Endothelial cell of umbilical vein (primary cell): ENCODE measurements at regions of chr18 and their contacts with region 1.

Region 1: DNA sequence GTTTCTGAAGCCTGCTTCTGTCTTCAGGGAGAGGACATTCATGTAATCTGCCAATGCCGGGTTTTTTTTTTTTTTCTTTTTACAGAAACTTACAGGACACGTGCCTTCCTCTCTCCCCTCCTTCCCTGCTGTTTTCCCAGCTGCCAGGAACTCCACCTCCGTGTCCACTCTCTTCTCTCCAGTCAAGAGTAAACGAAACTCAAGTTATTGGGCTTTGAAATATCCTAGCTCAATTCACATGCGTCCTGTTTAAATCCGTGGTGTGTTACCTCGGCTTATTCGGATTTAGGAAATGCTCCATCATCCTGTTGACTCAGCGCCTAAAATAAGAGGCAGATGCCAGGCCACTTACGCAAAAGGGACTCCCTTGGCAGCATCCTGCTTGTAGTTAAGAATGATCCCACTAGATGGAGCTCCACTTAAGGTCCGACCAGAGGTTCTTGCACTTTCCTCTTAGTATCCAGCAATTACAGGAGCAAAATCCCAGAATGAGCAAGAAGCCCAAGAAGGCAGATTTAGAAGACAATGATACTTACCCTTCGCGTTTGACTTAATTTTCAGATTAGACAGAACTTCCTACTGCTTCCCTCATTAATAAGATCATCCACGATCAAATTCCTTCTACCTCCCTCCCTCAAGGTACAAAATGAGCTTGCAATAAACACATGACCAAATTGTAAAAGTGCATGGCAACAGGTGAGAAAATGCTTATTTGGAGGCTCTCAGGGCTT is 97.2 kb upstream of the ZCCHC2 start:
- DNase-seq: peak; percentile 98
- H3K4me3 ChIP-seq: peak overlapping the region in 2 of 3 experiments; percentile 28 to 64
- H3K27ac ChIP-seq: peak overlapping the region; percentile 86
- H3K4me1 ChIP-seq: peaks cover 16% of the 10 kb centered on the region
- H3K27me3 ChIP-seq: no peaks in the 10 kb centered on the region
- CTCF ChIP-seq: peak; percentile 78 to 86
- POLR2A ChIP-seq: no peak

Region 2: GRCh38 chr18:61690418-61691138 is 735.1 kb before region 1 on chr18:
- CTCF ChIA-PET with region 1: no interaction called
- POLR2A ChIA-PET with region 1: no interaction called
- dilution Hi-C with region 1: no loop called
- intact Hi-C with region 1: no loop called
- DNase-seq: no peak
- H3K4me3 ChIP-seq: no peak overlapping the region
- H3K27ac ChIP-seq: no peak overlapping the region
- H3K4me1 ChIP-seq: peaks cover 16% of the 10 kb centered on the region
- H3K27me3 ChIP-seq: no peaks in the 10 kb centered on the region
- CTCF ChIP-seq: no peak
- POLR2A ChIP-seq: no peak

Region 3: GRCh38 chr18:62186774-62187542 is 238.7 kb before region 1 on chr18 and contains the starts of genes PIGN and RELCH:
- CTCF ChIA-PET with region 1: interaction called, 9 read pairs
- POLR2A ChIA-PET with region 1: no interaction called
- dilution Hi-C with region 1: no loop called
- intact Hi-C with region 1: loop called (anchors 1 kb)
- DNase-seq: peak; percentile 99
- H3K4me3 ChIP-seq: peak within 1 kb of the TSS; percentile 86 to 97 (median 94)
- H3K27ac ChIP-seq: peak within 1 kb of the TSS; percentile 79
- H3K4me1 ChIP-seq: peaks cover 34% of the 10 kb centered on the region
- H3K27me3 ChIP-seq: no peaks in the 10 kb centered on the region
- CTCF ChIP-seq: no peak
- POLR2A ChIP-seq: peak; percentile 88
- total RNA-seq, gene PIGN: 26.1 and 31.1 TPM in 2 replicates
- total RNA-seq, gene RELCH: 20.7 and 25.2 TPM in 2 replicates

Region 4: DNA sequence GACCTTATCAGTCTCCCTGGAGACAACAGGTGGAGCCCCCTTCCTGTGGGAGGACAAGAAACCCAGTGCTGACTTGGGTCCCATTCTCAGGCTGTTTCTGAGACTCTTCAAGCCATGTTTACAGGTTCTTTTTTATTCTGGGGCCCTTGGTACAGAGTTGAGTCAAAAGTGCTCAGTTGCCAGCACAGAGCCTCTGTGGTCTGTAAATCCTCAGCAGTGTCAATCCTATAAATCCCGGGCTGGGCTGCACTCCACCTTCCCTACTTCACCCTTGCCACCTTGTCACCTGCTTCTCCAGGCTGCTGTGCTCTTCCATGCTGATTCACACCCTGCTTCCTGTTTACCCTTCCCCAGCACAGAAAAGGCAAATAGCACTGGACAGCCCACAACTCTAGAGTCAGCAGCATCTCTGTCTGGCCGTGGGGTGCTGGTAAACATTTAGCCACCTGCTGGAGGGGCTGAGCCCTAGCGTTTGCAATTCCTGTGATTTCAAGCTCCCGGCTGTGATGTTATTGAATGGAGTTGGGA is 25.8 kb before region 1 on chr18:
- CTCF ChIA-PET with region 1: interaction called, 11 read pairs
- POLR2A ChIA-PET with region 1: no interaction called
- dilution Hi-C with region 1: no loop called
- intact Hi-C with region 1: no loop called
- DNase-seq: peak; percentile 46
- H3K4me3 ChIP-seq: no peak overlapping the region
- H3K27ac ChIP-seq: no peak overlapping the region
- H3K4me1 ChIP-seq: peaks cover 4% of the 10 kb centered on the region
- H3K27me3 ChIP-seq: no peaks in the 10 kb centered on the region
- CTCF ChIP-seq: peak; percentile 46 to 52
- POLR2A ChIP-seq: no peak

Region 5: DNA sequence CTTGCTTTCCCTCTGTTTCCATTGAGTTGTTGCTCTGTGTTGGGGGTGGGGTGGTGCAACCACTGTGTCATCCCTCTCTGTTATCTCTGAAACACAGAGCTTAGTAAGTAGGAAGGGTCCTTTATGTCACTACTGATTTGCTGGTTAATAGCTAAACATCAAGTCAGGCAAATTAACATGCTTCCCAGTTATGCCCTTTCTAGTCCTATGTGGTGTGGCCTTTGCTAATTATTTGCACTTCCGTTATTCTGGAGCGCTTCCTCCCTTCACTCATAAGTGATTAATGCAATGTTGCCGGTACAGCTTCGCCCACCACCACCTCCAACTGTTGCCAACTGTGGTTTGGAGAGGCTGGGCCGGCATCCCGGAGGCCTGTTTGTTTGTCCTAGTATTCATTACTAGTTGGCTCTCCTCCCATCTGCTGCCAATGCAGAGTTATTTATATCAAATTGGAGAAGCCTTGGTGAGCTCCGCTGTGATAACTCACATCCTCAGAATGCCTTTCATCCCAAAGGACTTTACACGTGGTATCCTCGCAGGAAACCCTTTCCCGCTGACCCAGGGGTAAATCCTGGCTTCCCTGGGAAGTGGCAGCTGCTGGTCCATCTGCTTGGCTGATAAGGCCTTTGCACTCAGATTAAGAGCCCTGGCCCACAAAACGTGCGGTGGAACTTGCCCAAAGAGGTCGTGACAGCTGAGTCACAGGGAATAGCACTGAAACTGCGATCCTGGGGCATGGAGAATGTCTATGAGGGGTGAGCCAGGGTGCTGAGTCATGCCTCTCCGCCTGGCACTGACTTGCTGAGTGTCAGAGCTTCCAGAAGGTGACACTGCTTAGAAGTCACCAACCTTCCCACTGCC is 25.1 kb after region 1 on chr18:
- CTCF ChIA-PET with region 1: interaction called, 71 read pairs
- POLR2A ChIA-PET with region 1: interaction called, 4 read pairs
- dilution Hi-C with region 1: no loop called
- intact Hi-C with region 1: loop called (anchors 1 kb)
- DNase-seq: peak; percentile 99
- H3K4me3 ChIP-seq: peak overlapping the region in 1 of 3 experiments; percentile 26
- H3K27ac ChIP-seq: peak overlapping the region; percentile 87
- H3K4me1 ChIP-seq: peaks cover 33% of the 10 kb centered on the region
- H3K27me3 ChIP-seq: no peaks in the 10 kb centered on the region
- CTCF ChIP-seq: no peak
- POLR2A ChIP-seq: peak; percentile 65

Region 6: DNA sequence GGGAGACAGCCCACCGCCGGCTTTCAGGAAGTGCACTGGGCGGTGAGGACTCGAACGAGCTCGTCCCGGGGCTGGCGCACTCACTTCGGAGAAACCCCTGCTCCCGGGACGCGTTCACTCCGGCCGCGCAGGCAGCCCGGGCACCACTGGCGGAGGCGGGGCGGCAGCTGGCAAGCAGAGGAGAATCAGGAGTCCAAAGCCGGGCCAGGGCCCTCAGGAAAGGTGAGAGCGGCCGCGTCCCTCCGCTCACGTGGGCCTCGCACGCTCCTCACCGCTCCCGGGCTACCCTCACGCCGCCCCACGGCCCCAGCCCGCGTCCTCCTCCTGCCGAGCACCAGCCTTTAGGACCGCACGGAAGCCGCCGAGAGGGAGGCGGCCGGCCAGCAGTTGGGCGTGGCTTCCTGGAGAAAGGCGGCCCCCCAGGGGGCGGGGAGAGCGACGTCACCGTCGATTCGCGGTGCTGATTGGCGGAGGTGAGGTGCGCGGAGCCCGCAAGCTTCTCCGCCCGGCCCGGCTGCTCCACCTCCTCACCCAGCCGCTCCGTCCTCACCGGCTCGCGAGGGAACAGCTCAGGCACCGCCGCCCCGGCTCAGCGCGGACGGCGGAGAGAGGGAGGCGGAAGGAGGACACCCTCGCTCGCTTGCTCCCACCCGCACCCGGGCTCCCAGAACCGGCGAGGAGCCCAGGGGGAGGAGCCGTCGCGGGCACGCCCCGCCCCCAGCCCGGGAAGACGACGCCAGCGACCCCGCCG is 97.0 kb after region 1 on chr18 and contains the start of gene ZCCHC2:
- CTCF ChIA-PET with region 1: interaction called, 60 read pairs
- POLR2A ChIA-PET with region 1: no interaction called
- dilution Hi-C with region 1: no loop called
- intact Hi-C with region 1: loop called (anchors 1 kb)
- DNase-seq: peak; percentile 99
- H3K4me3 ChIP-seq: peak within 1 kb of the TSS; percentile 85 to 98 (median 96)
- H3K27ac ChIP-seq: peak within 1 kb of the TSS; percentile 94
- H3K4me1 ChIP-seq: peaks cover 30% of the 10 kb centered on the region
- H3K27me3 ChIP-seq: no peaks in the 10 kb centered on the region
- CTCF ChIP-seq: no peak
- POLR2A ChIP-seq: peak; percentile 79
- total RNA-seq, gene ZCCHC2: 20.6 and 27.2 TPM in 2 replicates

Region 7: GRCh38 chr18:62577765-62578164 is 152.1 kb after region 1 on chr18:
- CTCF ChIA-PET with region 1: interaction called, 10 read pairs
- POLR2A ChIA-PET with region 1: no interaction called
- dilution Hi-C with region 1: no loop called
- intact Hi-C with region 1: no loop called
- DNase-seq: peak; percentile 10
- H3K4me3 ChIP-seq: no peak overlapping the region
- H3K27ac ChIP-seq: no peak overlapping the region
- H3K4me1 ChIP-seq: peaks cover 4% of the 10 kb centered on the region
- H3K27me3 ChIP-seq: no peaks in the 10 kb centered on the region
- CTCF ChIP-seq: no peak
- POLR2A ChIP-seq: no peak

Region 8: DNA sequence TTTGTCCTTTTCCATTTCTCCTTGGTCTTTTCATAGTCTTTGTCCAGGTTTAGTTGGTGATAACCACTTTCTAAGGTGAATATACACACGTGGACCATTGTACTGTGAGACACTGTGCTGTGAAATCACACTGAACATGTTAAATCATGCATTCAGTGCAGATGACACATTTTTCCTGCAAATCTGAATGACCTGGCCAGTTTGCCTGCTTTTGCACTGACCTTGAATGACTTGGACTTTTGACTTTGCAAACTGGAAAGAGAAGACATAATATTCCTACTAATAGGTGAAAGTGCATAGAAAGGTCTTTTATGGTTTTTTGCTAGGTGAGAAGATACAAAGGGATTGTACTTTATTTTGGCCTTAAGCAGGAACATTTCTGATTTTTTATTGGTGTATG is 268.0 kb after region 1 on chr18:
- CTCF ChIA-PET with region 1: no interaction called
- POLR2A ChIA-PET with region 1: no interaction called
- dilution Hi-C with region 1: no loop called
- intact Hi-C with region 1: no loop called
- DNase-seq: no peak
- H3K4me3 ChIP-seq: no peak overlapping the region
- H3K27ac ChIP-seq: no peak overlapping the region
- H3K4me1 ChIP-seq: no peaks in the 10 kb centered on the region
- H3K27me3 ChIP-seq: no peaks in the 10 kb centered on the region
- CTCF ChIP-seq: no peak
- POLR2A ChIP-seq: no peak

Region 9: DNA sequence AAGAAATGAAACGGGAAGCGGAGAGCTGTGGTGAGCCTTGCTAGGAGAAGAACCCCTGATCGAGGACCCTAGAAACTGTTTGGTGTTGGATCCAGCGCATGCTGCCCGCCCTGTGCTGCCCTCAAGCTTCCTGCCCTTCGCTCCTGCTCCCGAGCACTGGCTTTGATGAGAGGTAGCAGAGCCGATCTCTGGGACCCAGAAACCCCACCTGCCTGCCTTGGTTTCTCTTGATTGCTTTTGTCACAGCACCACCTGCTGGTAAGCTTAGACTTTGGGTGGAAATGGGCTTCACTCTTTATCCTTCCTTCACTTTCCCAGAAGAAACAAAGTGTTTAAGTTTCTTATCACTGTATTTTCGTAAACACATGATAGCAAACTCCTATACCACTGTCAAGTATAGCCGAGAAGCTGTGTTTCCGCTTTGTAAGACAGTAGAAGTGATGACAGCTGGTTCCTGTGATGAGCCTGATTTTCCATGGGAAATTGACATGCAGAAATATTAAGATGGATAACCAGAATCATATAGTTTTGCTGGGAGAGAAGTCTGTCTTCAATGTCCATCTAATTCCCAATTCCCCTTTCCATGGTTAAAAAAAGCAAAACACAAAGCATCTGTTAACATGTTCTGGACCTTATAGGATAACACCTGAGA is 557.1 kb after region 1 on chr18:
- CTCF ChIA-PET with region 1: no interaction called
- POLR2A ChIA-PET with region 1: no interaction called
- dilution Hi-C with region 1: no loop called
- intact Hi-C with region 1: loop called (anchors 1 kb)
- DNase-seq: peak; percentile 65
- H3K4me3 ChIP-seq: no peak overlapping the region
- H3K27ac ChIP-seq: no peak overlapping the region
- H3K4me1 ChIP-seq: peaks cover under 1% of the 10 kb centered on the region
- H3K27me3 ChIP-seq: no peaks in the 10 kb centered on the region
- CTCF ChIP-seq: peak; percentile 72 to 75
- POLR2A ChIP-seq: no peak